ENCODE measurements at regions of chr12 and their contacts with region 1.

Region 1: GRCh38 chr12:24991209-24992049 is 42.5 kb upstream of the BCAT1 start:
- DNase-seq: peak in 2 of 7 donors; percentile 8 to 9
- H3K4me3 ChIP-seq: no peak overlapping the region
- H3K27ac ChIP-seq: no peak overlapping the region
- H3K4me1 ChIP-seq: no peaks in the 10 kb centered on the region
- H3K27me3 ChIP-seq: no peaks in the 10 kb centered on the region
- CTCF ChIP-seq: peak; percentile 47 to 77 (median 70)
- POLR2A ChIP-seq: no peak

Region 2: GRCh38 chr12:25130741-25131188 is 139.3 kb after region 1 on chr12:
- intact Hi-C with region 1: loop called (anchors 5 to 10 kb)
- DNase-seq: no peak
- H3K4me3 ChIP-seq: no peak overlapping the region
- H3K27ac ChIP-seq: no peak overlapping the region
- H3K4me1 ChIP-seq: no peaks in the 10 kb centered on the region
- H3K27me3 ChIP-seq: no peaks in the 10 kb centered on the region
- CTCF ChIP-seq: peak; percentile 47 to 80 (median 65)
- POLR2A ChIP-seq: no peak